ENCODE measurements at regions of chr13 and their contacts with region 1.

Region 1: DNA sequence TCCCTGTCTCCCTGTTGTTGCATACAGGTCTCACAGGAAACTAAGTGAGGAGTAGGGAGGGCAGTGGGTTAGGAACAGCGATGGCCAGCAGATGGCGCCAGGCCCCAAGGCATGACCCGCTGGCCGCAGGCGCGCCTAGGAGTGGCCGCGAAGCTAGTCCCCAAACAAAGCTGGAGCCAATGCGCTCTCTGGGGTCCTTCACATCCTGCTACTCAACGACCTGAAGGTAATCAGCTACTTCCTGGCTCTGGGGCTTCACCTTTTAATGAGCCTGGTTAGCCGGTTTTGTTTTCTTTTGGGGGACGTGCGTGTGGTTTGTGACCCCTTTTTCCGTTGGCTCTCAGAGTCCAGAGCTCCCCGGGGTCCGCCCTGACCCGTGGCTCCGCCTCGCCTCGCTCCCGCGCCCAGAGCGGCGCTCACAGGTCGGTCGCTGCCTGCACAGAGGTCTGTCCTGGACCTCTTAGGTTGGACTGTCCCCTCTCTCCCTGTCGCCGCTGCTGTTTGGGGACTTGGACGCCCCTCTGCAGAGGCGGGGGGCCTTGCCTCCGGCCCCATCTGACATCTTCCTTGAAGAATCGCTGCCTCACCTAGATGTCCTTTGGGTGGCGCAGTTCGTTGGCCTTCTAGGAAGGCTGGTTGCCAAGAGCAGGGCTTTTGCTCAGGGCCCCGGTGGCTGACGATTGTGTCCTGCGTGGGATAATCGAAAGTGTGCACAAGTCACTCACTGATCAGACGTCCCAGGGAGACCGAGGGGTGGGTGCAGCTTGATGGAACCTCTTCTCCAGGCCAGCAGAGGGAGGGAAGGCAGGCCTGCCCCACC is 62.1 kb upstream of the GTF3A start:
- DNase-seq: peak; percentile 62 to 72 (median 66)
- H3K4me3 ChIP-seq: peak overlapping the region in 1 of 2 donors; percentile 17
- H3K4me3 Mint-ChIP-seq: peak overlapping the region in 6 of 8 donors; percentile 31 to 81 (median 46)
- H3K27ac ChIP-seq: no peak overlapping the region
- H3K27ac Mint-ChIP-seq: no peak overlapping the region
- H3K4me1 ChIP-seq: peaks cover 9% of the 10 kb centered on the region
- H3K4me1 Mint-ChIP-seq: peaks cover 0 to 7% (median 2%) of the 10 kb centered on the region in 4 donors
- H3K27me3 ChIP-seq: peaks cover 4% of the 10 kb centered on the region
- H3K27me3 Mint-ChIP-seq: peaks cover 5 to 22% of the 10 kb centered on the region in 2 donors

Region 2: GRCh38 chr13:26977556-26977955 is 384.7 kb before region 1 on chr13:
- CTCF ChIA-PET with region 1: interaction called, 354 read pairs
- POLR2A ChIA-PET with region 1: no interaction called
- intact Hi-C with region 1: no loop called
- DNase-seq: no peak
- H3K4me3 ChIP-seq: no peak overlapping the region
- H3K4me3 Mint-ChIP-seq: no peak overlapping the region
- H3K27ac ChIP-seq: no peak overlapping the region
- H3K27ac Mint-ChIP-seq: no peak overlapping the region
- H3K4me1 ChIP-seq: peaks cover under 1% of the 10 kb centered on the region
- H3K4me1 Mint-ChIP-seq: peaks cover 0 to 4% (median 0%) of the 10 kb centered on the region in 4 donors
- H3K27me3 ChIP-seq: no peaks in the 10 kb centered on the region
- H3K27me3 Mint-ChIP-seq: peaks cover 8 to 14% of the 10 kb centered on the region in 2 donors

Region 3: GRCh38 chr13:27339299-27339698 is 23.0 kb before region 1 on chr13:
- CTCF ChIA-PET with region 1: interaction called, 14 read pairs
- POLR2A ChIA-PET with region 1: no interaction called
- intact Hi-C with region 1: no loop called
- DNase-seq: peak in 4 of 5 donors; percentile 11 to 33 (median 28)
- H3K4me3 ChIP-seq: no peak overlapping the region
- H3K4me3 Mint-ChIP-seq: no peak overlapping the region
- H3K27ac ChIP-seq: no peak overlapping the region
- H3K27ac Mint-ChIP-seq: no peak overlapping the region
- H3K4me1 ChIP-seq: no peaks in the 10 kb centered on the region
- H3K4me1 Mint-ChIP-seq: peaks cover 0 to 4% (median 1%) of the 10 kb centered on the region in 4 donors
- H3K27me3 ChIP-seq: no peaks in the 10 kb centered on the region
- H3K27me3 Mint-ChIP-seq: peaks cover 6 to 21% of the 10 kb centered on the region in 2 donors

Region 4: GRCh38 chr13:27644302-27644701 is 282.0 kb after region 1 on chr13:
- CTCF ChIA-PET with region 1: no interaction called
- POLR2A ChIA-PET with region 1: no interaction called
- intact Hi-C with region 1: no loop called
- DNase-seq: no peak
- H3K4me3 ChIP-seq: no peak overlapping the region
- H3K4me3 Mint-ChIP-seq: no peak overlapping the region
- H3K27ac ChIP-seq: no peak overlapping the region
- H3K27ac Mint-ChIP-seq: no peak overlapping the region
- H3K4me1 ChIP-seq: peaks cover 4% of the 10 kb centered on the region
- H3K4me1 Mint-ChIP-seq: peaks cover 20 to 47% (median 36%) of the 10 kb centered on the region in 4 donors
- H3K27me3 ChIP-seq: no peaks in the 10 kb centered on the region
- H3K27me3 Mint-ChIP-seq: no peaks in the 10 kb centered on the region

Region 5: GRCh38 chr13:27953676-27954405 is 591.6 kb after region 1 on chr13:
- CTCF ChIA-PET with region 1: interaction called, 10 read pairs
- POLR2A ChIA-PET with region 1: no interaction called
- intact Hi-C with region 1: no loop called
- DNase-seq: peak in 4 of 5 donors; percentile 42 to 52 (median 46)
- H3K4me3 ChIP-seq: peak overlapping the region in 1 of 2 donors; percentile 32
- H3K4me3 Mint-ChIP-seq: peak overlapping the region; percentile 58 to 82 (median 74)
- H3K27ac ChIP-seq: no peak overlapping the region
- H3K27ac Mint-ChIP-seq: no peak overlapping the region
- H3K4me1 ChIP-seq: peaks cover 6% of the 10 kb centered on the region
- H3K4me1 Mint-ChIP-seq: peaks cover 0 to 16% (median 10%) of the 10 kb centered on the region in 4 donors
- H3K27me3 ChIP-seq: peaks cover 45% of the 10 kb centered on the region
- H3K27me3 Mint-ChIP-seq: peaks cover 41 to 51% of the 10 kb centered on the region in 2 donors

Region 6: GRCh38 chr13:28792992-28793391 is 1430.7 kb after region 1 on chr13:
- CTCF ChIA-PET with region 1: no interaction called
- POLR2A ChIA-PET with region 1: no interaction called
- intact Hi-C with region 1: loop called (anchors 5 kb)
- DNase-seq: no peak
- H3K4me3 ChIP-seq: no peak overlapping the region
- H3K4me3 Mint-ChIP-seq: no peak overlapping the region
- H3K27ac ChIP-seq: no peak overlapping the region
- H3K27ac Mint-ChIP-seq: no peak overlapping the region
- H3K4me1 ChIP-seq: no peaks in the 10 kb centered on the region
- H3K4me1 Mint-ChIP-seq: peaks cover 0 to 4% (median 0%) of the 10 kb centered on the region in 4 donors
- H3K27me3 ChIP-seq: no peaks in the 10 kb centered on the region
- H3K27me3 Mint-ChIP-seq: peaks cover 7 to 20% of the 10 kb centered on the region in 2 donors

Measured in CD4-positive, alpha-beta memory T cell (primary cell).